B cell (primary cell): ENCODE measurements at regions of chr22 and their contacts with region 1.

Region 1: GRCh38 chr22:30968924-30969539 is at the start of gene TUG1:
- DNase-seq: peak; percentile 99
- ATAC-seq: peak; percentile 91
- H3K4me3 ChIP-seq: peak within 1 kb of the TSS; percentile 74 to 88 (median 82)
- H3K4me3 Mint-ChIP-seq: peak within 1 kb of the TSS; percentile 98
- H3K27ac ChIP-seq: peak within 1 kb of the TSS; percentile 90 to 94
- H3K27ac Mint-ChIP-seq: peak within 1 kb of the TSS; percentile 99
- H3K4me1 ChIP-seq: peaks cover 19 to 20% of the 10 kb centered on the region in 2 donors
- H3K4me1 Mint-ChIP-seq: peaks cover 60% of the 10 kb centered on the region
- H3K27me3 ChIP-seq: no peaks in the 10 kb centered on the region
- H3K27me3 Mint-ChIP-seq: no peaks in the 10 kb centered on the region
- CTCF ChIP-seq: no peak
- total RNA-seq, gene TUG1: 110 and 119 TPM in 2 replicates

Region 2: DNA sequence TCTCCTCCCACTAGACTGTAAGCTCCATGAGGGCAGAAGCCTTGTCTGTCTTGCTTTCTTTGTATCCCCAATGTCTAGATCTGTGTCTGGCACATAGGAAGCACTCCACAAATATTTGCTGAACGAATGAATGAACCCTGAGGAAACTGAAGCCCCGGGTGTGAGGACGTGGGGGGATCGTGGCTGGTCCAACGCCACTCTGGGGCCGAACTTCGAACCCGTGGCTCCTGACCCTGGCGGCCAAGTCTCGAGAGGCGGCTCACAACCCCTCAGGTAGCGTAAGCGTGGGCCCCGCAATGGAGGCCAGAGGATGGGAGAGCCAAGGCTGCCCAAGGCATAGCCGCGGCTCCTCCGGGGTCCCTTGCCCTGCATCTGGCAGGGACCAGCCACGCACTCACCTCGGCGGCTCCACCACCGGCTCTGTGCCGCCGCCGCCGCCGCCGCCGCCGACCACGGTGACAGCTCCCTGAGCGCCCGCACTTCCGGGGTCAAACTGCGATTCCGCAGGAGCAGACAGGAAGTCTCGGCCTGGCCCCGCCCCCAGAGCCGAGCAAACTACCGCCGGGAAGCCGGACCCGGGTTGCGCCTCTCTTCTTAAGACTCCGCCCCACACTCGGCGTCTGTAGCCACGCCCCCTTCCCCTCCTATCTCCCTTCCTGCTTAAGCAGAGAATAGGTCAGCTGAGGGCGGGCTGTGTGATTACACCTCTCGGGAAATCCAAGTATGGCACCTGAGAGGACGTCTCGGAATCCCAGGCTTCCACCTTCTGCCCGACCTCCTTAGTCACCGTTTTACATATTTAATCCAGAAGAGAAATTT is 1131.0 kb before region 1 on chr22 and contains the start of gene ASCC2:
- CTCF ChIA-PET with region 1: no interaction called
- POLR2A ChIA-PET with region 1: no interaction called
- intact Hi-C with region 1: loop called (anchors 5 kb)
- DNase-seq: peak; percentile 99
- ATAC-seq: peak; percentile 100
- H3K4me3 ChIP-seq: peak within 1 kb of the TSS; percentile 75 to 96 (median 91)
- H3K4me3 Mint-ChIP-seq: peak within 1 kb of the TSS; percentile 93
- H3K27ac ChIP-seq: peak within 1 kb of the TSS; percentile 80 to 91
- H3K27ac Mint-ChIP-seq: peak within 1 kb of the TSS; percentile 96
- H3K4me1 ChIP-seq: peaks cover 15 to 19% of the 10 kb centered on the region in 2 donors
- H3K4me1 Mint-ChIP-seq: peaks cover 26% of the 10 kb centered on the region
- H3K27me3 ChIP-seq: no peaks in the 10 kb centered on the region
- H3K27me3 Mint-ChIP-seq: peaks cover 4% of the 10 kb centered on the region
- CTCF ChIP-seq: no peak
- total RNA-seq, gene ASCC2: 84.0 and 87.2 TPM in 2 replicates

Region 3: DNA sequence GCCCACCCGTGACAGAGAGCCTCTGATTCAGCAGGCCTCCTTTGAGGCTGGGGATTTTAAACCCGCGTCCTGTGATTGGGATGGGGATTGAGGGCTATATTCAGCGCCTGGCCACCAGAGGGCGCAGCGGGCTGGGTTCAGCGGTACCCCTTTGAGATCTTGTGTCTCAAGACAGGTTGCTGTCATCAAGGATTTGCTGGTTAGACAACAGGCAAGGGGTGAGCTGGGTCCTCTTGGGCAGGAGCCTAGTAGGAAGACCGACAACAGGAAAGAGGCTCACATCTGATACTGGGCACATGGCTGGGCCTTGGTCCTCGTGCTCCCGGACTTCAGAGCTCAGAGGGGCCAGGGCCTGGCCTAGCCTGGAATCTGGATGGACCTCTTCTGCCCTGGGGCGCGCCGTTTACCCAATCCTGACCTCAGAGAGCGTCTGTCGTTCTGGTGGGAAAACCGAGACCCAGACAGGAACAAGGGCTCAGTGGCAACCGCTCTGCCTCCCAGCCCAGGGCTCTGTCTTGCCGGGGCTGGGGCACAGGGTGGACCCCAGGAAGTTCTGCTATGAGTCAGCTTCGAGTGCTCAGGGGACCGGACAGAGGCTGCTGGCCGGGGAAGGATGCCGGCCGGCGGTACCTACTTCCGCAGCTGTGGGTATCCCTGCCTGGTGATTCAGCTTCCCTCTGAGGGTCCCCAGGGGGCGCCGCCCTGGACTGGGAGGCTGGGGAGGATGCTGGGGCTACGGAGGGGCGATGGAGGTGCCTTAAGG is 334.4 kb before region 1 on chr22:
- CTCF ChIA-PET with region 1: interaction called, 8 read pairs
- POLR2A ChIA-PET with region 1: interaction called, 4 read pairs
- intact Hi-C with region 1: loop called (anchors 1 kb)
- DNase-seq: peak; percentile 92
- ATAC-seq: peak; percentile 52
- H3K4me3 ChIP-seq: peak overlapping the region in 4 of 5 experiments; percentile 52 to 79 (median 65)
- H3K4me3 Mint-ChIP-seq: peak overlapping the region; percentile 88
- H3K27ac ChIP-seq: peak overlapping the region; percentile 82 to 88
- H3K27ac Mint-ChIP-seq: peak overlapping the region; percentile 94
- H3K4me1 ChIP-seq: peaks cover 18 to 28% of the 10 kb centered on the region in 2 donors
- H3K4me1 Mint-ChIP-seq: peaks cover 19% of the 10 kb centered on the region
- H3K27me3 ChIP-seq: no peaks in the 10 kb centered on the region
- H3K27me3 Mint-ChIP-seq: no peaks in the 10 kb centered on the region
- CTCF ChIP-seq: peak; percentile 91

Region 4: GRCh38 chr22:31080848-31081649 is 112.0 kb after region 1 on chr22 and contains the start of gene SMTN:
- CTCF ChIA-PET with region 1: interaction called, 18 read pairs
- POLR2A ChIA-PET with region 1: interaction called, 6 read pairs
- intact Hi-C with region 1: loop called (anchors 1 kb)
- DNase-seq: peak; percentile 93
- ATAC-seq: peak; percentile 77
- H3K4me3 ChIP-seq: peak within 1 kb of the TSS; percentile 8 to 75 (median 67)
- H3K4me3 Mint-ChIP-seq: peak within 1 kb of the TSS; percentile 92
- H3K27ac ChIP-seq: no peak within 1 kb of the TSS
- H3K27ac Mint-ChIP-seq: peak within 1 kb of the TSS; percentile 58
- H3K4me1 ChIP-seq: peaks cover 22 to 50% of the 10 kb centered on the region in 2 donors
- H3K4me1 Mint-ChIP-seq: peaks cover 34% of the 10 kb centered on the region
- H3K27me3 ChIP-seq: no peaks in the 10 kb centered on the region
- H3K27me3 Mint-ChIP-seq: no peaks in the 10 kb centered on the region
- CTCF ChIP-seq: no peak
- total RNA-seq, gene SMTN: 4.0 and 4.7 TPM in 2 replicates

Region 5: GRCh38 chr22:31160328-31160978 is 191.4 kb after region 1 on chr22:
- CTCF ChIA-PET with region 1: no interaction called
- POLR2A ChIA-PET with region 1: interaction called, 6 read pairs
- intact Hi-C with region 1: loop called (anchors 1 kb)
- DNase-seq: no peak
- ATAC-seq: peak; percentile 29
- H3K4me3 ChIP-seq: peak overlapping the region; percentile 65 to 81 (median 74)
- H3K4me3 Mint-ChIP-seq: peak overlapping the region; percentile 95
- H3K27ac ChIP-seq: peak overlapping the region; percentile 82 to 83
- H3K27ac Mint-ChIP-seq: peak overlapping the region; percentile 95
- H3K4me1 ChIP-seq: peaks cover 19 to 24% of the 10 kb centered on the region in 2 donors
- H3K4me1 Mint-ChIP-seq: peaks cover 33% of the 10 kb centered on the region
- H3K27me3 ChIP-seq: peaks cover 0 to 2% (median 0%) of the 10 kb centered on the region in 4 experiments
- H3K27me3 Mint-ChIP-seq: no peaks in the 10 kb centered on the region
- CTCF ChIP-seq: no peak

Region 6: GRCh38 chr22:31399211-31400028 is 430.4 kb after region 1 on chr22 and contains the start of gene DRG1:
- CTCF ChIA-PET with region 1: no interaction called
- POLR2A ChIA-PET with region 1: no interaction called
- intact Hi-C with region 1: loop called (anchors 2 kb)
- DNase-seq: peak; percentile 95
- ATAC-seq: peak; percentile 99
- H3K4me3 ChIP-seq: peak within 1 kb of the TSS; percentile 79 to 88 (median 85)
- H3K4me3 Mint-ChIP-seq: peak within 1 kb of the TSS; percentile 98
- H3K27ac ChIP-seq: peak within 1 kb of the TSS; percentile 60 to 89
- H3K27ac Mint-ChIP-seq: peak within 1 kb of the TSS; percentile 95
- H3K4me1 ChIP-seq: peaks cover 13 to 17% of the 10 kb centered on the region in 2 donors
- H3K4me1 Mint-ChIP-seq: peaks cover 21% of the 10 kb centered on the region
- H3K27me3 ChIP-seq: no peaks in the 10 kb centered on the region
- H3K27me3 Mint-ChIP-seq: peaks cover 2% of the 10 kb centered on the region
- CTCF ChIP-seq: no peak
- total RNA-seq, gene DRG1: 58.9 and 77.7 TPM in 2 replicates

Region 7: DNA sequence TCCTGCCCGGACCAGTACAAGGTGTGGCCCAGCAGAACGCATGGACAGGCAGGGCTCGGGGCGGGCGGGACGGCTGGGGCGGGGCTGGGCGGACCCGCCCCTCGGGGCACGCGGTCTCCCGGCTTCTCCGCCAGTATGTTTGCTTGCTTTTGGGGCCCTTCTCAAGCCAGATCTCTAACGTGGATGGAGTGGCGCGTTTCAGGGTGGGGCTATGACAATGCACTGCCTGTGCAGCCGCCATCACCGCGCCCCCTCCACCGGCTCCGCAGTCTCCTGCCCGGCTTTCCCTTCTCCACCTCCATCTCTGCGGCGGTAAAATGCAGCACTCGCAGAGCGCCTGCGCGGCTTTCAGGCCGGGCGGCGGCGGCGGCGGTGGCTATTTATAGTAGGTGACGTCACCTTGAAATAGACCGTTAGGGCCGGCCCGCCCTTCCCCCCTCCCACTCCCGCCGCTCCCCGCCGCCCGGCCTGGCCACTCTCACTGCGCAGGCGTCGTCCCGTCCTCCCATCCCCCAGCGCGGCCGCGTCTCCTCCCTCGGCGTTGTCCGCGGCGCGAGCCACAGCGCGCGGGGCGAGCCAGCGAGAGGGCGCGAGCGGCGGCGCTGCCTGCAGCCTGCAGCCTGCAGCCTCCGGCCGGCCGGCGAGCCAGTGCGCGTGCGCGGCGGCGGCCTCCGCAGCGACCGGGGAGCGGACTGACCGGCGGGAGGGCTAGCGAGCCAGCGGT is 975.1 kb after region 1 on chr22 and contains the start of gene YWHAH:
- CTCF ChIA-PET with region 1: no interaction called
- POLR2A ChIA-PET with region 1: no interaction called
- intact Hi-C with region 1: loop called (anchors 5 kb)
- DNase-seq: peak; percentile 96
- ATAC-seq: peak; percentile 85
- H3K4me3 ChIP-seq: peak within 1 kb of the TSS; percentile 67 to 78 (median 75)
- H3K4me3 Mint-ChIP-seq: no peak within 1 kb of the TSS
- H3K27ac ChIP-seq: peak within 1 kb of the TSS; percentile 82 to 85
- H3K27ac Mint-ChIP-seq: peak within 1 kb of the TSS; percentile 97
- H3K4me1 ChIP-seq: peaks cover 29 to 31% of the 10 kb centered on the region in 2 donors
- H3K4me1 Mint-ChIP-seq: peaks cover 18% of the 10 kb centered on the region
- H3K27me3 ChIP-seq: no peaks in the 10 kb centered on the region
- H3K27me3 Mint-ChIP-seq: no peaks in the 10 kb centered on the region
- CTCF ChIP-seq: no peak
- total RNA-seq, gene YWHAH: 46.6 and 51.1 TPM in 2 replicates